GM12878 (cell line): ENCODE measurements at regions of chrX and their contacts with region 1.

Region 1: GRCh38 chrX:88284844-88285243 is 462.2 kb upstream of the CPXCR1 start:
- DNase-seq: no peak
- ATAC-seq: no peak
- H3K4me3 ChIP-seq: no peak overlapping the region
- H3K27ac ChIP-seq: no peak overlapping the region
- H3K4me1 ChIP-seq: no peaks in the 10 kb centered on the region
- H3K27me3 ChIP-seq: no peaks in the 10 kb centered on the region
- CTCF ChIP-seq: no peak
- EP300 ChIP-seq: no peak
- POLR2A ChIP-seq: no peak
- RAD21 ChIP-seq: no peak

Region 2: GRCh38 chrX:88378406-88378805 is 93.6 kb after region 1 on chrX:
- CTCF ChIA-PET with region 1: no interaction called
- POLR2A ChIA-PET with region 1: no interaction called
- RAD21 ChIA-PET with region 1: no interaction called
- SMC1A ChIA-PET with region 1: no interaction called
- in situ Hi-C with region 1: no loop called
- intact Hi-C with region 1: no loop called
- DNase-seq: no peak
- ATAC-seq: no peak
- H3K4me3 ChIP-seq: no peak overlapping the region
- H3K27ac ChIP-seq: no peak overlapping the region
- H3K4me1 ChIP-seq: no peaks in the 10 kb centered on the region
- H3K27me3 ChIP-seq: no peaks in the 10 kb centered on the region
- CTCF ChIP-seq: no peak
- EP300 ChIP-seq: no peak
- POLR2A ChIP-seq: no peak
- RAD21 ChIP-seq: no peak

Region 3: GRCh38 chrX:88397551-88397950 is 112.7 kb after region 1 on chrX:
- CTCF ChIA-PET with region 1: no interaction called
- POLR2A ChIA-PET with region 1: no interaction called
- RAD21 ChIA-PET with region 1: no interaction called
- SMC1A ChIA-PET with region 1: no interaction called
- in situ Hi-C with region 1: no loop called
- intact Hi-C with region 1: no loop called
- DNase-seq: no peak
- ATAC-seq: no peak
- H3K4me3 ChIP-seq: no peak overlapping the region
- H3K27ac ChIP-seq: no peak overlapping the region
- H3K4me1 ChIP-seq: no peaks in the 10 kb centered on the region
- H3K27me3 ChIP-seq: no peaks in the 10 kb centered on the region
- CTCF ChIP-seq: no peak
- EP300 ChIP-seq: no peak
- POLR2A ChIP-seq: no peak
- RAD21 ChIP-seq: no peak

Region 4: GRCh38 chrX:89034679-89035078 is 749.8 kb after region 1 on chrX:
- CTCF ChIA-PET with region 1: no interaction called
- POLR2A ChIA-PET with region 1: no interaction called
- RAD21 ChIA-PET with region 1: no interaction called
- SMC1A ChIA-PET with region 1: no interaction called
- in situ Hi-C with region 1: no loop called
- intact Hi-C with region 1: loop called (anchors 5 kb)
- DNase-seq: no peak
- ATAC-seq: no peak
- H3K4me3 ChIP-seq: no peak overlapping the region
- H3K27ac ChIP-seq: no peak overlapping the region
- H3K4me1 ChIP-seq: no peaks in the 10 kb centered on the region
- H3K27me3 ChIP-seq: no peaks in the 10 kb centered on the region
- CTCF ChIP-seq: no peak
- EP300 ChIP-seq: no peak
- POLR2A ChIP-seq: no peak
- RAD21 ChIP-seq: no peak